ENCODE measurements at regions of chr1 and their contacts with region 1.

Region 1: GRCh38 chr1:204806943-204807687 is 63.5 kb upstream of the NFASC start:
- DNase-seq: peak; percentile 92 to 97 (median 96)
- ATAC-seq: peak; percentile 99
- H3K4me3 ChIP-seq: peak overlapping the region; percentile 46
- H3K27ac ChIP-seq: no peak overlapping the region
- H3K4me1 ChIP-seq: peaks cover 2 to 6% of the 10 kb centered on the region in 2 experiments; a peak in 3 of 5 replicates
- H3K27me3 ChIP-seq: peaks cover 0 to 13% of the 10 kb centered on the region in 2 experiments; a peak in 2 of 5 replicates
- CTCF ChIP-seq: peak; percentile 98 to 100 (median 98)
- EP300 ChIP-seq: no peak
- POLR2A ChIP-seq: no peak
- RAD21 ChIP-seq: peak; percentile 96 to 98

Region 2: GRCh38 chr1:204363335-204364124 is 443.6 kb before region 1 on chr1:
- CTCF ChIA-PET with region 1: no interaction called
- POLR2A ChIA-PET with region 1: no interaction called
- in situ Hi-C with region 1: no loop called
- intact Hi-C with region 1: loop called (anchors 10 kb)
- DNase-seq: peak; percentile 84 to 88 (median 87)
- ATAC-seq: peak; percentile 88
- H3K4me3 ChIP-seq: peak overlapping the region; percentile 30
- H3K27ac ChIP-seq: peak overlapping the region; percentile 31; the same call in 2 of the 3 replicates
- H3K4me1 ChIP-seq: peaks cover 24 to 34% of the 10 kb centered on the region in 2 experiments
- H3K27me3 ChIP-seq: peaks cover 14 to 44% of the 10 kb centered on the region in 2 experiments
- CTCF ChIP-seq: peak; percentile 96 to 100 (median 98)
- EP300 ChIP-seq: peak; percentile 22; the same call in 1 of the 2 replicates
- POLR2A ChIP-seq: no peak
- RAD21 ChIP-seq: peak; percentile 100

Region 3: GRCh38 chr1:204446370-204447111 is 360.6 kb before region 1 on chr1:
- CTCF ChIA-PET with region 1: interaction called, 26 read pairs
- POLR2A ChIA-PET with region 1: no interaction called
- in situ Hi-C with region 1: no loop called
- intact Hi-C with region 1: loop called (anchors 1 kb)
- DNase-seq: peak; percentile 70 to 79 (median 74)
- ATAC-seq: peak; percentile 82
- H3K4me3 ChIP-seq: no peak overlapping the region
- H3K27ac ChIP-seq: no peak overlapping the region
- H3K4me1 ChIP-seq: peaks cover 0 to 4% of the 10 kb centered on the region in 2 experiments; a peak in 1 of 5 replicates
- H3K27me3 ChIP-seq: peaks cover 12 to 59% of the 10 kb centered on the region in 2 experiments; a peak in 4 of 5 replicates
- CTCF ChIP-seq: peak in 2 of 3 experiments; percentile 72 to 83; a peak in 4 of 6 replicates
- EP300 ChIP-seq: no peak
- POLR2A ChIP-seq: no peak
- RAD21 ChIP-seq: peak; percentile 86 to 91

Region 4: GRCh38 chr1:204623894-204624361 is 183.2 kb before region 1 on chr1:
- CTCF ChIA-PET with region 1: interaction called, 27 read pairs
- POLR2A ChIA-PET with region 1: no interaction called
- in situ Hi-C with region 1: no loop called
- intact Hi-C with region 1: loop called (anchors 1 kb)
- DNase-seq: peak; percentile 71 to 88 (median 76)
- ATAC-seq: peak; percentile 89
- H3K4me3 ChIP-seq: no peak overlapping the region
- H3K27ac ChIP-seq: no peak overlapping the region
- H3K4me1 ChIP-seq: peaks cover 37 to 40% of the 10 kb centered on the region in 2 experiments
- H3K27me3 ChIP-seq: peaks cover 10 to 25% of the 10 kb centered on the region in 2 experiments
- CTCF ChIP-seq: peak; percentile 85 to 99 (median 87)
- EP300 ChIP-seq: no peak
- POLR2A ChIP-seq: no peak
- RAD21 ChIP-seq: peak in 1 of 2 experiments; percentile 45; a peak in 2 of 4 replicates

Region 5: DNA sequence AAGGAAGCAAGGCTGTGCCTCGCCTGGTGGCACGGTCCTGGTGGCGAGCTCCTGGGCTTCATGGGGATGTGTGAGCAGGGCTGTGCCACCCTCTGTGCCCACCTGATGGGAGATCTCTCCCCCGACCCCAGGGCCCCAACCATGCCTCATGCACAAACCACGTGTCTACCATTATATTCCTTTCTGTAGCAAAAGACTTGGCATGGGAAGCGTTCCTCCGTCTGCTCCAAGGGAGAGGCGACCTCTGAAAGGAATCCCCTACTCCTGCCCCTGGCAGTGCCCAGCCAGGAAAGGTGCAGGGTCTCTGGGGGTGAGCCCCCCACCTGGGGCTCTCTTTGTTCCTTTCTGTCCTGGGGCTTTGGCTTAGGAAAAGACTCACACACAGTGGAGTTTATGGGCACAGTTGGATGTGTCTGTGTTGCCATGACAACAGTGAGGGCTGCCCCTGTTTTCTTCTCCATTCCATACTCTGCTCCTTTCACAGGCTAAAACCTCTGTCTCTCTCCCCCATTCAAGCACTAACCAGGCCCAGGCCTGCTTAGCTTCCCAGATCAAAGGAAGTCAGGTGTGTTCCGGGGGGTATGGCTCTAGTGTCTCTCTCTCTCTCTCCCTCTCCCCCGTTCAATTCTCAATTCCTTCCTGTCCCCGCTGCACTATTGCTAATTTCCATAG is 100.1 kb before region 1 on chr1:
- CTCF ChIA-PET with region 1: no interaction called
- POLR2A ChIA-PET with region 1: no interaction called
- in situ Hi-C with region 1: no loop called
- intact Hi-C with region 1: no loop called
- DNase-seq: peak in 1 of 4 experiments; percentile 27
- ATAC-seq: no peak
- H3K4me3 ChIP-seq: no peak overlapping the region; the same call in 1 of the 2 replicates
- H3K27ac ChIP-seq: peak overlapping the region; percentile 73
- H3K4me1 ChIP-seq: peaks cover 30 to 73% of the 10 kb centered on the region in 2 experiments
- H3K27me3 ChIP-seq: no peaks in the 10 kb centered on the region
- CTCF ChIP-seq: no peak
- EP300 ChIP-seq: no peak
- POLR2A ChIP-seq: no peak
- RAD21 ChIP-seq: no peak

Region 6: GRCh38 chr1:204915861-204916495 is 108.9 kb after region 1 on chr1:
- CTCF ChIA-PET with region 1: no interaction called
- POLR2A ChIA-PET with region 1: no interaction called
- in situ Hi-C with region 1: no loop called
- intact Hi-C with region 1: no loop called
- DNase-seq: no peak
- ATAC-seq: no peak
- H3K4me3 ChIP-seq: no peak overlapping the region
- H3K27ac ChIP-seq: no peak overlapping the region
- H3K4me1 ChIP-seq: no peaks in the 10 kb centered on the region
- H3K27me3 ChIP-seq: peaks cover 2 to 9% of the 10 kb centered on the region in 2 experiments; a peak in 4 of 5 replicates
- CTCF ChIP-seq: no peak
- EP300 ChIP-seq: no peak
- POLR2A ChIP-seq: no peak
- RAD21 ChIP-seq: no peak

Region 7: GRCh38 chr1:204961765-204962419 is 154.8 kb after region 1 on chr1:
- CTCF ChIA-PET with region 1: no interaction called
- POLR2A ChIA-PET with region 1: no interaction called
- in situ Hi-C with region 1: no loop called
- intact Hi-C with region 1: loop called (anchors 5 kb)
- DNase-seq: no peak
- ATAC-seq: peak; percentile 11; the same call in 1 of the 3 replicates
- H3K4me3 ChIP-seq: no peak overlapping the region
- H3K27ac ChIP-seq: no peak overlapping the region
- H3K4me1 ChIP-seq: peaks cover 0 to 11% of the 10 kb centered on the region in 2 experiments; a peak in 3 of 5 replicates
- H3K27me3 ChIP-seq: peaks cover 24 to 52% of the 10 kb centered on the region in 2 experiments
- CTCF ChIP-seq: peak in 2 of 3 experiments; percentile 42 to 58; a peak in 4 of 6 replicates
- EP300 ChIP-seq: no peak
- POLR2A ChIP-seq: no peak
- RAD21 ChIP-seq: peak; percentile 61 to 67

Region 8: GRCh38 chr1:204980840-204981405 is 173.8 kb after region 1 on chr1:
- CTCF ChIA-PET with region 1: no interaction called
- POLR2A ChIA-PET with region 1: no interaction called
- in situ Hi-C with region 1: no loop called
- intact Hi-C with region 1: no loop called
- DNase-seq: no peak
- ATAC-seq: no peak
- H3K4me3 ChIP-seq: no peak overlapping the region
- H3K27ac ChIP-seq: no peak overlapping the region
- H3K4me1 ChIP-seq: peaks cover 7 to 13% of the 10 kb centered on the region in 2 experiments; a peak in 4 of 5 replicates
- H3K27me3 ChIP-seq: peaks cover 69 to 96% of the 10 kb centered on the region in 2 experiments
- CTCF ChIP-seq: no peak
- EP300 ChIP-seq: no peak
- POLR2A ChIP-seq: no peak
- RAD21 ChIP-seq: no peak

Measured in K562 (cell line).